ENCODE measurements at regions of chr6 and their contacts with region 1.

Region 1: DNA sequence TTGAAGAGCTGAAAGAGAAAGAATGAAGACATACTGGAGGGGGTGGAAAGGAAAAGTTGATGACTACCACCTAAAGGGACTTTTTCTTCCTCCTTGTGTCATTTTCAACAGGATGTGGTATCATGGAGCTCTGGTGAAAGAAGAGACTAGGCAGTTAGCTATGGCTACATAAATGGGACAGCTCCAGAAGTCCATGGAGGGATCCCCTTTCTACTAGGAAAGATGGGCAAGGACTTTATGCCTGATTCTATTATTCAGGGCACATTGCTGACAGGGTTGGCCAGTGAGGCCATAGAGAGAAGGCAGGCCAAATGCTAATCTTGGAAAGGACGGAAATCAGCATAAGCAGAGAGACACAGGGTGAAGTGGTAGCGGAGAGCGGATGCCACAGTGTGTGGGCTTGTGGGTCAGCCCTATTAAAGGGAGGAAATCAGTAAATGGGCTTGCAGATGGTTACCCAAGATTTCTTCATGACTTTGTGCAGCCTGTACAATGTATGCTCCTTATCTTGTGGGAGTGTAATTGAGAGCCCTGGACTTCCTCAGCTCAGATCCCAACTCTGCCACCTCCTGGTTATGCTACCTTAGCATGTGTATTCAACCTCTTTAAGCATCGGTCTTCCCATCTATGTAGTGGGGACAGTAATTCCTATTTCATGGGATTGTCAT is 77.4 kb upstream of the TMEM170B start:
- DNase-seq: no peak
- H3K4me3 Mint-ChIP-seq: peak overlapping the region; percentile 67
- H3K27ac Mint-ChIP-seq: peak overlapping the region; percentile 91
- H3K4me1 Mint-ChIP-seq: peaks cover 29% of the 10 kb centered on the region
- H3K27me3 Mint-ChIP-seq: peaks cover 2% of the 10 kb centered on the region

Region 2: DNA sequence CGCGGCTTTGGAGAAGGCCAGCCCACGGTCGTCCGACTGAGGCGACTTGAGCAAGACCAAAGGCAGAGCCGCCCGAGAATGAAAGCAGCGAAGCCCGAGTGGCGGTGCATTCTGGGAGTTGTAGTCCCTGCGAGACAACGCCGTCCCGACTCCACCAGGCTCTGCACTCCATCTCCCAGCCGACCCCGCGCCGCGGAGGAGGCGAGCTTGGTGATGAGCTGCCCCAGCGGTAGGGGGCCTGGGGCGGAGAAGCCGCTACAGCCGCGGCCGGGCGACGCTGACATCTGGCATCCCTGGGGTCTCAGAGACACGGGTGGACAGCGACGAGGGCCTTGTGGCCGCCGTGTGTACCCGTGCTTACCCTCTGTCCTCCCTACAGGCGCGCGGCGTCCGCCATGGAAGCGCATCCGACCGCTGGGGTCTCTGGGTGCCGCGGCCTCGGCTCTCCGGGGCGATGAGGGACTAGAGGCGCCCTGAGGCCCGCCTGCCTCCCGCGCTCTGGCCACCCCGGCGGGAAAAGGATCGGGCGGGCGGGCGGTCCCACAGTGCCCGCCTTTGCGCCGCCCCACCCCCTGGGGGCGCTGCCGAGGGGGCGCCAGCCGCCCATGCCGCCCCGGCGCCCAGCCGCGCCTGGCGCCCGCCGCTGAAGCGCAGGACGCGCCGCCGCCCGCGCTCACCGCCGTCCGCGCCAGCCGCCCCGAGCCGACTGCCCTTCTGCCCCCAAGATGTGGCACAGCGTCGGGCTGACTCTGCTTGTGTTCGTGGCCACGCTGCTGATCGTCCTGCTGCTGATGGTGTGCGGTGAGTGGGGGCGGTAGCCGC is 366.3 kb before region 1 on chr6 and contains the start of gene SMIM13:
- intact Hi-C with region 1: loop called (anchors 1 kb)
- DNase-seq: peak; percentile 92
- H3K4me3 Mint-ChIP-seq: peak within 1 kb of the TSS; percentile 96
- H3K27ac Mint-ChIP-seq: peak within 1 kb of the TSS; percentile 98
- H3K4me1 Mint-ChIP-seq: peaks cover 22% of the 10 kb centered on the region
- H3K27me3 Mint-ChIP-seq: peaks cover 2% of the 10 kb centered on the region
- total RNA-seq, gene SMIM13: 12.2 and 12.3 TPM in 2 replicates

Region 3: GRCh38 chr6:11144393-11144851 is 315.7 kb before region 1 on chr6:
- intact Hi-C with region 1: loop called (anchors 1 kb)
- DNase-seq: peak; percentile 62
- H3K4me3 Mint-ChIP-seq: no peak overlapping the region
- H3K27ac Mint-ChIP-seq: no peak overlapping the region
- H3K4me1 Mint-ChIP-seq: peaks cover 12% of the 10 kb centered on the region
- H3K27me3 Mint-ChIP-seq: peaks cover 4% of the 10 kb centered on the region

Region 4: DNA sequence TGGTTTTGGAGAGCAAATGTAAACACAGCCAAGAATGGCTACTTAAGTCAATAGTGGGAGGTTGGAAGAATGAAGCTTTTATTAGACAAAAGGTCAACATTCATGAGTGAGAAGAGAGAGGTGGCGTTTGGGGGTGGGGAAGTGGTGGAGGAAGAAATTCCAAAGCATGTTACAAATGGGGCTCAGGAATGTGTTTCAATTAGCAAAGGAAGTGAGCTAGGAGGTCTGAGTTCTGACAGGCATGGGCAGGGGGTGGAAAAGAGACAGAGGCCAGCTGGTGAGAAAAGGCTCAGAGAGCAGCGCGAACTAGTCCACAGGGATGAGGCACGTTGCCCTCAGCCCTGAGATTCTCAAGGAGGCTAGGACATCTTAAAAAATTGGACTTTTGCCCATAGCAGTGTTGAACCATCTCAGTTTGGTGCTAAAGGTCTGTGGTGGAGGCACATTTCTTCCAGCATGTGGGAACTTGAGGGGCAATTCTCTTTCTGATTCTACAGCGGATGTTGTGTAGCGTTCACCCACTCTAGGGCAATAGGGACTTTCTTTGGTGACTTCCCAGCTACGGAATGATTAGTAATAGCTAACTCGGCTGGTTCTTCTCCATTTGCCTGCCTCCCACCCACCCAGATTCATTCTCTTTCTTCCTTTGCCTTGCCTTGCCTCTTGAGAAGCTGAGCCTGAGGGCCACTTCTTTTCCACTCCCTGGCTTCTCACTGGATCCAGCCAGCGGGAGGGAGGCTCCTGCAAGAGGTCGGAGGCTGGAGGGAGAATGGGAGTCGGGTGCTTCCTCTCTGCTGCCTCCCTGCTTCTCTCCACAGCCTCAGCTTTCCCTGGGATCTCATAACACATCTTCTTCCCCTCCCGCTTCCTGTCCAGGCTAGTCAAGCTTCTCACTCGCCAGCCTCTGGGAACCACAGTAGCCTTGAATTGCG is 182.6 kb before region 1 on chr6:
- intact Hi-C with region 1: loop called (anchors 5 kb)
- DNase-seq: no peak
- H3K4me3 Mint-ChIP-seq: no peak overlapping the region
- H3K27ac Mint-ChIP-seq: peak overlapping the region; percentile 95
- H3K4me1 Mint-ChIP-seq: peaks cover 38% of the 10 kb centered on the region
- H3K27me3 Mint-ChIP-seq: no peaks in the 10 kb centered on the region

Region 5: DNA sequence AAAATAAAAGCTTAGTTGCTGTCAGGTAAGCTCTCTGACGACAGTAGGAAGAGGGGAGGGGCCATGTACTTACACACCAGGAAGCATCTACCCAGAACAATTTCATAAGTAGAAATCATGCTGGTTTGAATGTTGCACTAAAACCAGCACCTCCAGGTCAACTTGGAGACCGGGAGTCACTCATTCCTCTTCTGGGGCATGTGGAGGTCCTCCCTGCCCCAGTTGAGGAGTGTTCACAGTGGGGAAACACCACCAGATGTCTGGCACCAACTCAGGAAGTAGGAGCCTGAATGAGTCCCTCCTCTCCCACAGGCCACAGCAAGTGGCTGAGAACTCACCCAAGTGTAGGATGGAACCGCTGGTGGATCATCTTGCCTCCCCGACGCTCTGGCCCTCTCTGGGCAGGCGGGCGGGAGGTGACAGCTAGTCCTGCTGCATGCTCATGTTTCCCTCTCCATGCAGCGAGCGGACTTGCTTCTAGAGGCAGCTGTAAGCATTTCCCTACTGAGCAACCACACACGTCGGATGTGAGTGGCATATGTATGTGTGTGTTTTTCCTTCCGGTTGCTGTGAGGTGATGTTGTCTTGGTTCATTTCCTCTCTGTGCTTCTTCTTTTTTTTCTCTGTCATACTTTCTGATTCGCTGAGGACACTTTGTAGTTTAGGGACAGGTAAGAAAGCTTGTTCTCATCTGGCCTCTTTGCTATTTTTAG is 78.2 kb before region 1 on chr6:
- intact Hi-C with region 1: loop called (anchors 5 kb)
- DNase-seq: peak; percentile 71
- H3K4me3 Mint-ChIP-seq: peak overlapping the region; percentile 85
- H3K27ac Mint-ChIP-seq: peak overlapping the region; percentile 92
- H3K4me1 Mint-ChIP-seq: peaks cover 59% of the 10 kb centered on the region
- H3K27me3 Mint-ChIP-seq: no peaks in the 10 kb centered on the region

Region 6: GRCh38 chr6:11424395-11425050 is 35.6 kb before region 1 on chr6:
- intact Hi-C with region 1: loop called (anchors 1 kb)
- DNase-seq: no peak
- H3K4me3 Mint-ChIP-seq: no peak overlapping the region
- H3K27ac Mint-ChIP-seq: peak overlapping the region; percentile 43
- H3K4me1 Mint-ChIP-seq: peaks cover 53% of the 10 kb centered on the region
- H3K27me3 Mint-ChIP-seq: no peaks in the 10 kb centered on the region

Region 7: GRCh38 chr6:11437824-11438459 is 22.2 kb before region 1 on chr6:
- intact Hi-C with region 1: loop called (anchors 1 kb)
- DNase-seq: no peak
- H3K4me3 Mint-ChIP-seq: no peak overlapping the region
- H3K27ac Mint-ChIP-seq: no peak overlapping the region
- H3K4me1 Mint-ChIP-seq: peaks cover 17% of the 10 kb centered on the region
- H3K27me3 Mint-ChIP-seq: no peaks in the 10 kb centered on the region

Region 8: GRCh38 chr6:11575408-11576033 is 115.4 kb after region 1 on chr6:
- intact Hi-C with region 1: no loop called
- DNase-seq: peak; percentile 24
- H3K4me3 Mint-ChIP-seq: no peak overlapping the region
- H3K27ac Mint-ChIP-seq: no peak overlapping the region
- H3K4me1 Mint-ChIP-seq: peaks cover 3% of the 10 kb centered on the region
- H3K27me3 Mint-ChIP-seq: peaks cover 2% of the 10 kb centered on the region